ENCODE measurements at regions of chr18 and their contacts with region 1.

Region 1: GRCh38 chr18:62186774-62187542 is at the starts of genes PIGN and RELCH:
- DNase-seq: peak; percentile 98
- ATAC-seq: peak; percentile 95
- H3K4me3 ChIP-seq: peak within 1 kb of the TSS; percentile 96
- H3K27ac ChIP-seq: peak within 1 kb of the TSS; percentile 87
- H3K4me1 ChIP-seq: peaks cover 8% of the 10 kb centered on the region; the same call in 1 of the 2 replicates
- H3K27me3 ChIP-seq: no peaks in the 10 kb centered on the region
- CTCF ChIP-seq: no peak
- POLR2A ChIP-seq: peak; percentile 70
- RAD21 ChIP-seq: no peak
- total RNA-seq, gene PIGN: 17.9 and 42.2 TPM in 2 replicates
- total RNA-seq, gene RELCH: 45.5 and 52.5 TPM in 2 replicates

Region 2: GRCh38 chr18:62239475-62239874 is 52.5 kb after region 1 on chr18:
- CTCF ChIA-PET with region 1: no interaction called
- POLR2A ChIA-PET with region 1: no interaction called
- dilution Hi-C with region 1: no loop called
- in situ Hi-C with region 1: no loop called
- intact Hi-C with region 1: no loop called
- DNase-seq: no peak
- ATAC-seq: no peak
- H3K4me3 ChIP-seq: no peak overlapping the region
- H3K27ac ChIP-seq: no peak overlapping the region
- H3K4me1 ChIP-seq: no peaks in the 10 kb centered on the region
- H3K27me3 ChIP-seq: no peaks in the 10 kb centered on the region
- CTCF ChIP-seq: no peak
- POLR2A ChIP-seq: no peak
- RAD21 ChIP-seq: no peak

Region 3: DNA sequence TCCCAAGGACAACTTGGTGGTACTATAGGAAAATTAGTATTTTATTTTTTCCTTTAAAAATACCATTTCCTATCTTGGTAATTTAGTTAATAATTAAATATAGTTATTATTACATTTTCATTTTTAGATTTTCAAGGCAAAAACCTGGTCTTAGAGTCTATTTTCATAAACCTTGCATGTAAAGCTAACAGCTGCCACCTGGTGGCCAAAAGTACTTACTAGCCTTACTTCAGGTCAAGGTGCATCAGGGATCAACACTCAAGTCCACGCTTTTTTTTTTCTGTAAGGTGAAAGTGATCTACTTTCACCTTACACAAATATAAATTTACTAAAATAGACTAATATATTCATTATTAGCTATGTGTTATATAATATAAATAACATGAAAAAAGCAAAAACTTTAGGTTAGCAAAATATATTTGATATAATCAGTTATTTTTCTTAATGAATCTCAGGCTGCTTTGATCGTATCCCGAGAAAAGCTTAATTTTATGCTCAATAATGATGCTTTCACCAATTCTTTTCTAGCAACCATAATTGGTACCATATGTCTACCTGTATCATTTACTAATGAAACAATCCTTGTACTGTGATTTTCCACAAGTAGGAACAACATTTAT is 62.6 kb after region 1 on chr18:
- CTCF ChIA-PET with region 1: interaction called, 9 read pairs
- POLR2A ChIA-PET with region 1: no interaction called
- dilution Hi-C with region 1: no loop called
- in situ Hi-C with region 1: loop called (anchors 5 kb)
- intact Hi-C with region 1: loop called (anchors 1 kb)
- DNase-seq: peak; percentile 83
- ATAC-seq: peak; percentile 73
- H3K4me3 ChIP-seq: no peak overlapping the region
- H3K27ac ChIP-seq: no peak overlapping the region
- H3K4me1 ChIP-seq: no peaks in the 10 kb centered on the region
- H3K27me3 ChIP-seq: no peaks in the 10 kb centered on the region
- CTCF ChIP-seq: peak; percentile 67
- POLR2A ChIP-seq: no peak
- RAD21 ChIP-seq: peak; percentile 59

Region 4: DNA sequence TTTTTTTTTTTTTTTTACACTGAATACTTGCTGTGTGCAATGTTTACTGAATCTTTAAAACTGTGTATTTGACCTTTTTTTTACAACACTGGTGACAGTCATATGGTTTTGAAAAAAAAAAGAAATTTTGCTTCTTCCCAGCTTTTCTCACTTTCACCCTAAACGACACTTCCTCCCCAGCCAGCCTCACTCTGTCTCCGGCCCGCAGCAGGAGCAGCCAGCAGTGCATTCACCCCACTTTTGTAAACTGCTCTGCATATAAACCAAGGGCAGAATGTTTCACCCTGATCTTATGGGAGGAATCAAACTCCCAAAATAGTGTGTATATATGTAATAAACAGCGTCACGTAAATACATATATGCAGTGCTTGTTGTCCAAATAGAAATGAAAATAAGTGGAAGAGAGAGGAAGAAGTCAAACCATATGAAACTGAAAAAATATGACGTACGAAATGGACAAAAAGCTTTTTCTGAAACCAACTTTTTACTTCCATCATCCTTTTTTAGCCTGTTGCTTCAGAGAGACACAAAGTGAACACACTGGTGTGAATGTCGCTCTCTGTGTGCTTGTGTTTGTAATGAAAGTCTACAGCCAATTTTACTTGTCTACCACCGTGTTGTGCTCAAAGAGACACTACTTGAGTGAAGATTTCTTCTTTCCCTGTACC is 390.0 kb after region 1 on chr18:
- CTCF ChIA-PET with region 1: no interaction called
- POLR2A ChIA-PET with region 1: no interaction called
- dilution Hi-C with region 1: no loop called
- in situ Hi-C with region 1: loop called (anchors 10 kb)
- intact Hi-C with region 1: no loop called
- DNase-seq: no peak
- ATAC-seq: no peak
- H3K4me3 ChIP-seq: no peak overlapping the region
- H3K27ac ChIP-seq: no peak overlapping the region
- H3K4me1 ChIP-seq: peaks cover 1% of the 10 kb centered on the region
- H3K27me3 ChIP-seq: no peaks in the 10 kb centered on the region
- CTCF ChIP-seq: no peak
- POLR2A ChIP-seq: no peak
- RAD21 ChIP-seq: no peak

Region 5: DNA sequence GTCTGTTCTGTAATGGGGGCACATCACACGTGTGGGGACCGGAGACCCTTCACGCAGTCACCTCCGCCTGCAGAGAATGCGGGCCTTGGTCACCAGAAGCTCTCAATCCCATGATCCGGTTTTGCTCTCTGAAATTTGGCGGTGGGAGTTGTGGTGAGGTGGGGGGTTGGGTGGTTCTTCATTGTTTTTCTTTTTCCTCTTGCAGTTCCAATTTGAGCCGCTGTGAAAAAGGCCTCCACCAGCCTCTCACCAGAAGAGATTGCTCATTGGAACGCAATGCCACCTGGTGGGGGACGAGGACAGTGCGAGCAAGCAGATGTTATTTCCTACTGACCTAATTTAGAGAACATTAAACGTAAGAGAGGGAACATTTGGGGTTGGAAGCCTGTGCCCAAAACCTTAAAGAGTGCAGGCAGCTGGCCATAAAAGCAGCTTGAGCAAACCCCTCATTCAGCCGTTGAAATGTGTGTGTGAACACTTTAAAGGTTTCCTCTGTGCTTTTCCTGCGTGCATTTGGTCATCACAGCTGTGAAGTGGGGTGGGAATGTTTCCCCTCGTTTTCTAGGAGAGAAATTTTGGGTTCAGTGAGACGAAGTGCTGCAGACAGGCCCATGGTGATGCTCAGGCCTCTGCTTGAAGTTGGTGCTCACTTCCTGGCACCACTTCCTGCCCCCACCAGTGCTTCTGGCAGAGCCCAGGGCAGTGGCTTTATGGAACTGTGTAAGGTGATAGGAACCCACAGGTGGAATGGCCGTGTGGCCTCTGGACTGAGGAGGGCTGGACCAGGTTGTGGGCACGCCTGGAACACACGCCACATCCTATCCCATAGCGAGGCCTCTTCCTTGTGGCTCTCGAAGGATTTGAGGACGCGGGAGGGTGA is 397.5 kb after region 1 on chr18:
- CTCF ChIA-PET with region 1: no interaction called
- POLR2A ChIA-PET with region 1: no interaction called
- dilution Hi-C with region 1: no loop called
- in situ Hi-C with region 1: loop called (anchors 10 kb)
- intact Hi-C with region 1: loop called (anchors 1 kb)
- DNase-seq: peak; percentile 88
- ATAC-seq: peak; percentile 93
- H3K4me3 ChIP-seq: no peak overlapping the region
- H3K27ac ChIP-seq: no peak overlapping the region
- H3K4me1 ChIP-seq: peaks cover 1% of the 10 kb centered on the region; the same call in 1 of the 2 replicates
- H3K27me3 ChIP-seq: peaks cover 3% of the 10 kb centered on the region; the same call in 1 of the 2 replicates
- CTCF ChIP-seq: peak; percentile 99
- POLR2A ChIP-seq: no peak
- RAD21 ChIP-seq: peak; percentile 91

Region 6: GRCh38 chr18:62982600-62983251 is 795.8 kb after region 1 on chr18:
- CTCF ChIA-PET with region 1: no interaction called
- POLR2A ChIA-PET with region 1: no interaction called
- dilution Hi-C with region 1: no loop called
- in situ Hi-C with region 1: loop called (anchors 25 kb)
- intact Hi-C with region 1: loop called (anchors 10 kb)
- DNase-seq: peak; percentile 63
- ATAC-seq: peak; percentile 63
- H3K4me3 ChIP-seq: no peak overlapping the region
- H3K27ac ChIP-seq: no peak overlapping the region
- H3K4me1 ChIP-seq: peaks cover 3% of the 10 kb centered on the region
- H3K27me3 ChIP-seq: peaks cover 6% of the 10 kb centered on the region
- CTCF ChIP-seq: peak; percentile 90
- POLR2A ChIP-seq: no peak
- RAD21 ChIP-seq: peak; percentile 92